Mammary epithelial cell (primary cell): ENCODE measurements at regions of chr6 and their contacts with region 1.

Region 1: DNA sequence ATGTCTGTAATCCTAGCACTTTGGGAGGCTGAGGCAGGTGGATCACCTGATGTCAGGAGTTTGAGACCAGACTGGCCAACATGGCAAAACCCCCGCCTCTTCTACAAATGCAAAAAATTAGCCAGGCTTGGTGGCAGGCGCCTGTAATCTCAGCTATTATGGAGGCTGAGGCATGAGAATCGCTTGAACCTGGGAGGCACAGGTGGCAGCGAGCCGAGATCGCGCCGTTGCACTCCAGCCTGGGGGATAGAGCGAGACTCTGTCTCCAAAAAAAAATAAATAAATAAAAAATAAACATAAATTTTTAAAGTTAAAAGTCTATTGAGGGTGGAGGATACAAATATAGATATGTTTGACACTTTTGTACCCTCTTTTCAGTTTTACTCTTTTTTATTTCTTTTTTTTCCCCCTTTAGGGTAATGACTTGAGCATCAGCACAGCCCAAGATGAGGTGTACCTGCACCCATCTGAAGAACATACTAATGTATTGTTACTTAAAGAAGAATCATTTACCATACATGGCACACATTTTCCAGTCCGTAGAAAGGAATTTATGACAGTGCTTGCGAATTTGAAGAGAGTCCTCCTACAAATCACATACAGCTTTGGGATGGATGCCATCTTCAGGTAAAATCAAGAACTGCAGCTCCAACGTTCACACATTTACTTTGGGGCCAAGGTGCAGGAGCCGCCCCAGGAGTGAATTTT is 368.9 kb downstream of the LAMA2 start:
- DNase-seq: peak; percentile 58
- H3K4me3 ChIP-seq: no peak overlapping the region
- H3K27ac ChIP-seq: no peak overlapping the region
- H3K4me1 ChIP-seq: no peaks in the 10 kb centered on the region
- H3K27me3 ChIP-seq: peaks cover 4% of the 10 kb centered on the region
- CTCF ChIP-seq: peak; percentile 83 to 85

Region 2: DNA sequence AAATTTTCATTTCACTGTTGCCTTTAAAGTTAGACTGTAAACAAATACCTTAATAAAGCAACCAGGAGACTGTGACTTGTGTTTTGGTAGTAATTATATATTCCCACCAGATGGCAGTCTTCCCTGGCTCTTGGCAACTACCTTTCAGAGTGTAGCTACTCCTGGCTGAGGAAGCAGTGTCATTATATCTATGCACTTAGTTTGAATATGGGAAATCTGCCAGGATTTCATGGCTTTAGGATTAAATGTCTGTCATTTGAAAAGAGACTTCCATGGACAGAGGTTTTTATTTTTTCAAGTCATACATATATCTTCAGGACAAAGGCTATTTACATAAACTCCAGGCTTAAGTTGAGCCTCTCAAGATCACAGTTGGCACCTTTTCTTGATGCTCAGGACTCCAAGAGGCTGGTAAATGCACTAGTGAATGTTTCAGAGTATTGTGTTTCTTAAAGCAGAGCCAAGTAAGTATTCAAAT is 1514.8 kb before region 1 on chr6:
- CTCF ChIA-PET with region 1: no interaction called
- dilution Hi-C with region 1: no loop called
- in situ Hi-C with region 1: no loop called
- intact Hi-C with region 1: loop called (anchors 1 kb)
- DNase-seq: peak; percentile 50
- H3K4me3 ChIP-seq: no peak overlapping the region
- H3K27ac ChIP-seq: no peak overlapping the region
- H3K4me1 ChIP-seq: no peaks in the 10 kb centered on the region
- H3K27me3 ChIP-seq: no peaks in the 10 kb centered on the region
- CTCF ChIP-seq: peak; percentile 51 to 67

Region 3: GRCh38 chr6:127855542-127856159 is 1396.2 kb before region 1 on chr6:
- CTCF ChIA-PET with region 1: interaction called, 3 read pairs
- dilution Hi-C with region 1: no loop called
- in situ Hi-C with region 1: no loop called
- intact Hi-C with region 1: loop called (anchors 2 kb)
- DNase-seq: no peak
- H3K4me3 ChIP-seq: no peak overlapping the region
- H3K27ac ChIP-seq: no peak overlapping the region
- H3K4me1 ChIP-seq: no peaks in the 10 kb centered on the region
- H3K27me3 ChIP-seq: no peaks in the 10 kb centered on the region
- CTCF ChIP-seq: peak; percentile 3 to 44

Region 4: DNA sequence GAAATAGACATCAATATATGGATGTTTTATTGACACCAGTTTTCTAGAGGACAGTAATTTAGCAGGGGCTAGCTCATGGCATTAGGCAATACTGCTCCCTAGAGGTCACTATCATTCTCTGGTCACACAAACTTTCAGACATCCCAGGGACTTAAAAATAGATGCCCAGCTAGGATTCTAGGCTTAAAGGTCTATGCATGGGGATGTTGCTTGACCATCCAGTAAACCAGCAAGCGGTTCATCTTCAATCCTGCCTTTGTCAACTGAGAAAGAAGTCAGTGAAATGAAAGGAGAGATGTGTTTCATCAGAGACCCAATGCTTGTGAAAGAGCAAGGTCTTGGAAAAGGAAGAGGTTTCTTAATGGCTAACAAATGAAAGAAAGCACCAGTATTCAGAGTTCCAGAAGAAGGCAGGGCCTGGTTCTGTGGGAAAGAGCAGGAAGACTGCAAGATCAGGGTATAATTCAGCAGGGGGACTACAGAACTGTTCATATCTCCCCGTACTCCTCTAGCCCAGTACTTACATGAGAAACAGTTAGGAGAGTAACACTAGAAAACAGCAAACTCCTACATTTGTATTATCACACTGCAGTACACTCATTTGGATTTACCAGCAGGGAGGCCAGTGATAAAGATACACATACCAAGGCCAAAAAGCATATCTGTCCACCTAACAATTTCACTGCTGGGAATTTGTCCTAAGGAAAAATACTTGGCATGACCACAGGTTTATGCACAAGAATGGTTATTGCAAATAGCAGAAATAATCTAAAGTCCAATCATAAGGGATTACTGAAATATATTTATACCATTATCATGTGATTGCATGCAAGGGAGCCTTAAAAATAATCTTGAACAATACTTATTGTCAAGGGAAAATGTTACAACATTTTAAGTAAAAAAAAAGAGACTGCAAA is 520.3 kb before region 1 on chr6:
- CTCF ChIA-PET with region 1: no interaction called
- dilution Hi-C with region 1: no loop called
- in situ Hi-C with region 1: no loop called
- intact Hi-C with region 1: loop called (anchors 2 kb)
- DNase-seq: peak; percentile 47
- H3K4me3 ChIP-seq: no peak overlapping the region
- H3K27ac ChIP-seq: no peak overlapping the region
- H3K4me1 ChIP-seq: no peaks in the 10 kb centered on the region
- H3K27me3 ChIP-seq: no peaks in the 10 kb centered on the region
- CTCF ChIP-seq: peak; percentile 66 to 78

Region 5: DNA sequence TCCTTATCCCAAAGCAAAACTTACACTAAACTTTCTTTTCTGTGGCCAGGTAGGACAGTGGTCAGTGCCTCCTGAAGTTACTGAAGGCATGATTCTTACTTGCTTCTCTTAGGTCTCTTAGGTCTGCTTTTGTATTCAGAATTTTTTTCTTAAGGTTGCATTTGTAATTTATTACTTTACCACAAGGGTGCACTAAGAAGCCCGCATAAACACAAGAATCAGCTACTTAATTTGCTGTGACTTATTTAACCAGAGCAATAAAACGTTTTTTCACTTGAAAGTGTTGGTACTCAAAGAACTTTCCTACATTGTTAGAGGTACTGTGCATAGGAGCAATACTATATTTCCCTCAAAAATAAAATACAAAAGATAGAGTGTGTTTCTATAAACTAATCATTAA is 444.2 kb before region 1 on chr6:
- CTCF ChIA-PET with region 1: no interaction called
- dilution Hi-C with region 1: no loop called
- in situ Hi-C with region 1: loop called in 1 of 2 experiments (anchors 25 kb)
- intact Hi-C with region 1: loop called (anchors 1 kb)
- DNase-seq: peak; percentile 8
- H3K4me3 ChIP-seq: no peak overlapping the region
- H3K27ac ChIP-seq: no peak overlapping the region
- H3K4me1 ChIP-seq: no peaks in the 10 kb centered on the region
- H3K27me3 ChIP-seq: no peaks in the 10 kb centered on the region
- CTCF ChIP-seq: peak; percentile 43 to 62

Region 6: DNA sequence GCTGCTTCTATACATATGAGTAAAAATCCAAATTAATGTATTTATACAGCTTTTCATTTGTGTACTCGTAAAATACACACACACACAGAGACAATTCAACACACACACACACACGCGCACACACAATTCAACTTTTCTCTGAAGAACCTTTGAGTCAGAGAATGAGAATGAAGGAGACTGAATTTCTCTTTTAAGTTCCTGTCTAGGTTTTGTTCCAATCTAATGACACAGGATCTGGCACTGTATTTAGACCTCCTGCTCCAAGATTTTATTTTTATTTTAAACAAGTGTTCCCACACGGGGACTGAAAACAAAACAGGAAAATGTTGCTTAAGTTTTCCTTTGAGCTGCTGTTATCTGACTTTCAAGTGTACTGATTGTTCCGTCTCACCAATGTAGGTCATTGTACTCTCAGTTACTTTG is 118.0 kb before region 1 on chr6:
- CTCF ChIA-PET with region 1: no interaction called
- dilution Hi-C with region 1: no loop called
- in situ Hi-C with region 1: no loop called
- intact Hi-C with region 1: loop called (anchors 2 kb)
- DNase-seq: no peak
- H3K4me3 ChIP-seq: no peak overlapping the region
- H3K27ac ChIP-seq: no peak overlapping the region
- H3K4me1 ChIP-seq: no peaks in the 10 kb centered on the region
- H3K27me3 ChIP-seq: no peaks in the 10 kb centered on the region
- CTCF ChIP-seq: no peak